Motor neuron (in vitro differentiated cells): ENCODE measurements at regions of chr11 and their contacts with region 1.

Region 1: DNA sequence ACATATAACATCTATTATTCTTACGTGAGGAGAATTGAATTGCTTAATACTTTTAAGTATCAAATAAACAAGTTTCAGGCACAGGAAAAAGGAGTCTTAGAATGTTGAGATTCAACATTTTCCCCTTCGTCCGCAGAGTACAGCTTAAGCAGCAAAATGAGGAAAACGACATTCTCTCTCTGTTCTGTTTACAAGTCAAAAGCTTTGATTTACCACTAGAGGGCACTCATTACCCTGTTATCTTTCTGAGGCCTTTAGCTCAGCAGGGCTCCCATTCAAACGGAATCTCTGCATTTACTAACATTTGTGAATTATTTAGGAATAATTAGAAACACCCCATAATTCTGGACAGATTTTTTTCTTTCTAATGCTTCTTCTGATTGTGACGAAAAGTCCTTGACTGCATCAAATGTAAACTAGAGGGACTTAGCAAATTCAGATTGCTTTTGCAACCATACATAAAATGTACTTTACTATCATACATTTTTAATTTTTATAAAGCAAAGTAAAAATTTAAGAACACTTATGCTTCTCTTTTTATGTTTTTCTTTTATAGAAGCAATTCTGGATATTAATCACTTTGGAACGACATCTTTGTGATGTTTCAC is 75.0 kb downstream of the JRKL start:
- ATAC-seq: peak; percentile 72 to 87 (median 80)
- H3K4me3 ChIP-seq: no peak overlapping the region
- H3K27ac ChIP-seq: no peak overlapping the region
- H3K4me1 ChIP-seq: peaks cover 0 to 3% of the 10 kb centered on the region in 2 donors

Region 2: DNA sequence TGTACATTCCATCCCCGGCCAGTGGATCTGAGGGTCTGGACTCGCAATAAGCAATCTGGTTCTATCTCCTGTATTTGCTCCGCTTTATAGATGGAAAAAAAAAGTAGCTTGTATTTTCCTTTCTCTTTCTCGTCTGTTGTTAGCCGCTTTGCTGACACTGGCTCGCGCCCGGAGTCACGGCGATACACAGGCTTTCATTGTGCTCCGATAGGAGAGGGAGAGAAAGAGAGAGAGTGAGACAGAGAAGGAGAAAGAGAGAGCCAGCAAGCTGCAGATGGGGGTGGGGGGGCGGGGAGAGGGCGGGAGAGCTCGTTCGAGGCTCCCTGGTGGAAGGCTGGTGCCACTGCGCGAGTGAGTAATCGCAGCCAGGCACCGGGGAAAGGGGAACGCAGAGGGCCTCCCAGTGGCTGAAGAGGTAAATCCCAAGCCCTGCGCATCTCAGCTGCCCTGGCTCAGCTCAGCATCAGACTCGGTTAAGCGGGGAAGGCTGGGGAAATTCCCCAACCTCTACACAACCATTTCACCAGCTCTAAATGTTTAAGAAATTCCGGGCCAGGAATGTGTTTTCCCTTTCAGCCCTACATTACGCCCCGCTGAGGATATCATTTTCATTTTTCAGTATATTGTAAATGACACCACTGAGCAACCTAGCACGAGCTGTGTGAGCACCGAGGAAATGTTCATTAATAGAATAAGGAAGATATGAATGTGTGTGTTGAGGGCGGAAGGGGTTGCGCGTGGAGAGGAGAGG is 121.7 kb before region 1 on chr11 and contains the start of gene MAML2:
- in situ Hi-C with region 1: no loop called
- ATAC-seq: peak; percentile 91 to 99 (median 96)
- H3K4me3 ChIP-seq: peak within 1 kb of the TSS; percentile 47 to 99 (median 60)
- H3K27ac ChIP-seq: peak within 1 kb of the TSS in 1 of 2 donors; percentile 59
- H3K4me1 ChIP-seq: peaks cover 42% of the 10 kb centered on the region in 2 donors
- total RNA-seq, gene MAML2: 4.9 to 21.2 (median 6.4) TPM

Region 3: GRCh38 chr11:96523656-96524055 is 58.9 kb after region 1 on chr11:
- in situ Hi-C with region 1: no loop called
- ATAC-seq: no peak
- H3K4me3 ChIP-seq: no peak overlapping the region
- H3K27ac ChIP-seq: no peak overlapping the region
- H3K4me1 ChIP-seq: no peaks in the 10 kb centered on the region

Region 4: DNA sequence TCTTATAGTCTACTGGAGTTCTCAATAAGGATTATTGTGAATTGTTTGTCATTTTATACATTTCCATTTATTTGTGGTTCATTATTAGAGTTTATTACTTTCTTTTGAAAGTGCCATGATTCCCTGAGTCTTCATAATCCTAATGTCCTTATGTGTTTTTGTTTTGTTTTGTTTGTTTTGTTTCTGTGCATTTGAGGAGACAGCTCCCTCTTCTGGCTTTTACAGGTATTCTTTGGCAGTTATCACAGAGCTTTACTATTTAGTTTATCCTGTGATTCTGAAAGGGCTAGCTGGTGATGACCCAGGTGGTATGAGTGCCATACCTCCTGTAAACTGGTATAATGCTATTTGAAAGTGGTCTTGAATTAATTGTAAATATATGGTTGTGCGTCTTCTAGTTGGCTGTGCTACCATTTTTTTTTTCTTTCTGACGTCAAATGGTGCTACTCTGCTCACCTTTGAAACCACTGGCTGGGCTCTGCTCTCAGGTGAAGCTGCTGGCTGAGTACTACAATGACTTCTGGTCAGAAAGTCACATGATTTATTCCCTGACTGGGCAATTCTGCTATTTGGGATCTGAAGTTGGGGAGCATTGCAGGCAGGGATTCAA is 676.2 kb after region 1 on chr11:
- in situ Hi-C with region 1: loop called in 1 of 9 experiments (anchors 25 kb)
- ATAC-seq: peak in 2 of 8 experiments; percentile 31 to 33
- H3K4me3 ChIP-seq: no peak overlapping the region
- H3K27ac ChIP-seq: no peak overlapping the region
- H3K4me1 ChIP-seq: no peaks in the 10 kb centered on the region